ENCODE measurements at regions of chr10 and their contacts with region 1.

Region 1: DNA sequence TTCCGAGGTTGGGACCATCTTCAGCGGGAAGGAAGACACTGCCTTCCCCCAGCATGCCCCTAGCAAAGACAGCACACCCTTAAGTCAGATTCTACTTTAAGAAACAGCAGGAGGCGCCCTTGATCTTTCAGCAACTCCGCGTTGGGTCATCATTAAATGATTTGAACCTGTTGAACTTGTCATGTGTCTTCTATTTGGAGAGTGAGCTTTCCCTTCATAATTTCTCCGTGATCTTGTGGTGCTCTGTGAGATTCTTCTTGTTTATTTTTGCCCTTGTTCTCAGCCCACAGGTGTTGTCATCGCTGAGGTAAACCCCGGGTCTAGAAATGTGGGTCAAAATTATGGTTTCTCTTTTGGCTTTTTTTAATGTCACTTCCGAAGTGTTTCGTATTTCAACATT is 49.5 kb upstream of the PITRM1 start:
- DNase-seq: peak in 1 of 2 donors; percentile 31
- ATAC-seq: peak; percentile 58 to 68 (median 63)
- H3K4me3 ChIP-seq: no peak overlapping the region
- H3K4me3 Mint-ChIP-seq: no peak overlapping the region
- H3K27ac ChIP-seq: peak overlapping the region; percentile 62
- H3K27ac Mint-ChIP-seq: no peak overlapping the region
- H3K4me1 ChIP-seq: peaks cover 3% of the 10 kb centered on the region
- H3K4me1 Mint-ChIP-seq: peaks cover 9 to 10% of the 10 kb centered on the region in 2 donors
- H3K27me3 ChIP-seq: no peaks in the 10 kb centered on the region
- H3K27me3 Mint-ChIP-seq: peaks cover 0 to 3% of the 10 kb centered on the region in 2 donors
- CTCF ChIP-seq: no peak

Region 2: DNA sequence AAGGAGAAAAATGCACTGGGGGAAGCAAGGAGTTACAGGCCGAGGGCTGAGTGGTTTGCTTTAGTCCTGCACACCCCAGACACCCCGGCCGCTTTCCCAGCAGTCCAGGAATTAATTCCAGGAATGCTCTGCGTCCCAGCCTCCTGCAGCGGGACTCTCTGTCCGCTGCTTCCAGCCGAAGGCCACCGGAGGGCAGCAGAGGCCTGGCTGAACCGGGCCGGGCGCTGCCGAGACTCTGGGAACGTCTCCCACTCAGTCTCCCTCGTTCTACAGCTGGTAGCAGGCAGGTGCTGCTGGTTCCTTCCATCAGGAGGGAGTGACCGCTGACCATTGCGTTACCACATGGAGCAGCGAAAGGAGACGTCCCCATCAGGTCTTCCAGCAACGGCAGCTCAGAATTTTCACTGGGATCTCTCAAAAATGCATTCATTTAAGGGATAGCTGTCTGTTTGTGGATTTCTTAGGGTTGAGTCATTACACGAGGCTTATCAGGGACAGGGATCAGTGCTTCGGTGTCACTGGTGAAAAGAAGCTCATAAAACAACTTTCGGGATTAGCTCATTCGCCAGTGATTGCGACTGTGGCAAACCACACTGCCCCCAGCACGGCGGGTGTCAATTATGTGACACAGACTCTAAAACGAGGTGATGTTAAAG is 24.6 kb before region 1 on chr10:
- intact Hi-C with region 1: loop called (anchors 1 kb)
- DNase-seq: peak; percentile 74 to 77
- ATAC-seq: peak; percentile 76 to 89 (median 79)
- H3K4me3 ChIP-seq: peak overlapping the region; percentile 20
- H3K4me3 Mint-ChIP-seq: peak overlapping the region; percentile 67
- H3K27ac ChIP-seq: no peak overlapping the region
- H3K27ac Mint-ChIP-seq: peak overlapping the region in 1 of 2 donors; percentile 70
- H3K4me1 ChIP-seq: peaks cover 16% of the 10 kb centered on the region
- H3K4me1 Mint-ChIP-seq: peaks cover 22 to 33% of the 10 kb centered on the region in 2 donors
- H3K27me3 ChIP-seq: peaks cover 15% of the 10 kb centered on the region
- H3K27me3 Mint-ChIP-seq: peaks cover 61 to 78% of the 10 kb centered on the region in 2 donors
- CTCF ChIP-seq: peak; percentile 65

Region 3: GRCh38 chr10:3372281-3372680 is 150.2 kb after region 1 on chr10:
- intact Hi-C with region 1: no loop called
- DNase-seq: no peak
- ATAC-seq: no peak
- H3K4me3 ChIP-seq: no peak overlapping the region
- H3K4me3 Mint-ChIP-seq: no peak overlapping the region
- H3K27ac ChIP-seq: no peak overlapping the region
- H3K27ac Mint-ChIP-seq: no peak overlapping the region
- H3K4me1 ChIP-seq: no peaks in the 10 kb centered on the region
- H3K4me1 Mint-ChIP-seq: no peaks in the 10 kb centered on the region
- H3K27me3 ChIP-seq: no peaks in the 10 kb centered on the region
- H3K27me3 Mint-ChIP-seq: peaks cover 0 to 3% of the 10 kb centered on the region in 2 donors
- CTCF ChIP-seq: no peak

Measured in natural killer cell (primary cell).